Activated CD4-positive, alpha-beta memory T cell treated with anti-CD3 and anti-CD28 coated beads for 36 hours (primary cell): ENCODE measurements at regions of chr12 and their contacts with region 1.

Region 1: GRCh38 chr12:49130151-49131050 is 794 bp downstream of the TUBA1B start:
- DNase-seq: peak; percentile 96
- H3K4me3 Mint-ChIP-seq: peak overlapping the region; percentile 97
- H3K27ac Mint-ChIP-seq: peak overlapping the region; percentile 99
- H3K4me1 Mint-ChIP-seq: peaks cover 46% of the 10 kb centered on the region
- H3K27me3 Mint-ChIP-seq: peaks cover 7% of the 10 kb centered on the region

Region 2: GRCh38 chr12:49069507-49070346 is 60.7 kb before region 1 on chr12 and contains the start of gene RHEBL1:
- CTCF ChIA-PET with region 1: interaction called, 15 read pairs
- POLR2A ChIA-PET with region 1: interaction called, 30 read pairs
- intact Hi-C with region 1: loop called (anchors 1 kb)
- DNase-seq: peak; percentile 100
- H3K4me3 Mint-ChIP-seq: peak within 1 kb of the TSS; percentile 98
- H3K27ac Mint-ChIP-seq: peak within 1 kb of the TSS; percentile 90
- H3K4me1 Mint-ChIP-seq: peaks cover 12% of the 10 kb centered on the region
- H3K27me3 Mint-ChIP-seq: no peaks in the 10 kb centered on the region
- total RNA-seq, gene RHEBL1: 15.6 to 16.1 TPM

Region 3: DNA sequence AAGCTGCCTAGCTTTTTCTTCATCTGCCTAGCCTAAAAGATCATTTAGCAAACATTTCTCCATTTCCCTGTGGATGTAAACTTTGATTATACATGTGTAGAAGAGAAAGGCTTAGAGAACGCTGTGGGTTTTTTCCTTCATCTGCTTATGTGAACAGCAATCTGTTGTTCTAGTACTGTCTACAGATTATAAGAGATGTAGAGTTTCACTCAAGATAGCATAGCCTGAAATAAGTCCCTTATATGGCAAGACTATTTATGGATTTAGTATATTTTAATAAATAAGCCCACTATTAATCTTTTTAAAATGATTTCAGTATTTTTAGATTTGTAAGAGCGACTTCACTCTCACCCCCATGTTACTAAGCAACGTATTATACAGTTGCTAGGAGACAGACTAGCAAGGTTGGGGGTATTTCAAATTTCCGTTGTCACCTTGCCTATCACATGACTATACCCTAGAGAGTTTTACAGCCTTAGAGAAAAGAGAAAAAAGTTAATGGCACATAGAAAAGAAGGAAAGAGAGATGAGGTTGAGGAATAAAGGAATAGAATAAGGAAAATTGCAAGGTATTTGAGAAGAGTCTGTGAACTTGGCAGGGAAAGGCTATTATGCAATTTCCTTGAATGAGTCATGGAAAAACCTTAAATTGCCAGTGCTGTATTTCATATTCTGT is 70.7 kb after region 1 on chr12:
- CTCF ChIA-PET with region 1: no interaction called
- POLR2A ChIA-PET with region 1: interaction called, 12 read pairs
- intact Hi-C with region 1: no loop called
- DNase-seq: no peak
- H3K4me3 Mint-ChIP-seq: no peak overlapping the region
- H3K27ac Mint-ChIP-seq: no peak overlapping the region
- H3K4me1 Mint-ChIP-seq: peaks cover 11% of the 10 kb centered on the region
- H3K27me3 Mint-ChIP-seq: peaks cover 3% of the 10 kb centered on the region

Region 4: GRCh38 chr12:49264738-49265515 is 134.5 kb after region 1 on chr12 and contains the start of gene TUBA1C:
- CTCF ChIA-PET with region 1: interaction called, 3 read pairs
- POLR2A ChIA-PET with region 1: interaction called, 36 read pairs
- intact Hi-C with region 1: loop called (anchors 1 kb)
- DNase-seq: peak; percentile 93
- H3K4me3 Mint-ChIP-seq: peak within 1 kb of the TSS; percentile 99
- H3K27ac Mint-ChIP-seq: peak within 1 kb of the TSS; percentile 99
- H3K4me1 Mint-ChIP-seq: peaks cover 47% of the 10 kb centered on the region
- H3K27me3 Mint-ChIP-seq: no peaks in the 10 kb centered on the region
- total RNA-seq, gene TUBA1C: 353 to 360 TPM